GM10248 (cell line): ENCODE measurements at regions of chr2 and their contacts with region 1.

Region 1: DNA sequence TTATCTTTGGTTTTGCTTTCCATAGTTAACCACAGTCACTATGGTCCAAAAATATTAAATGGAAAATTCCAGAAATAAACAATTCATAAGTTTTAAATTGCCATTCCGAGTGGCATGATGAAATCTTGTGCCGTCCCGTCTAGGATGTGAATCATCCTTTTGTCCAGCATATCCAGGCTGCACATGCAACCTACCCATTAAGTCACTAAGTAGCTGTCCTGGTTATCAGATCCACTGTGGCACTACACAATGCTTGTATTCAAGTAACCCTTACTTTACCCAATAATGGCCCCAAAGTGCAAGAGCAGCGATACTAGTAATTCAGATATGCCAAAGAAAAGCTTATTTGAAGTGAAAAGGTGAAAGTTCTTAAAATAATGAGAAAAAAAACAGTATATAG is 10.7 kb downstream of the USP34 start:
- DNase-seq: no peak
- CTCF ChIP-seq: no peak

Region 2: DNA sequence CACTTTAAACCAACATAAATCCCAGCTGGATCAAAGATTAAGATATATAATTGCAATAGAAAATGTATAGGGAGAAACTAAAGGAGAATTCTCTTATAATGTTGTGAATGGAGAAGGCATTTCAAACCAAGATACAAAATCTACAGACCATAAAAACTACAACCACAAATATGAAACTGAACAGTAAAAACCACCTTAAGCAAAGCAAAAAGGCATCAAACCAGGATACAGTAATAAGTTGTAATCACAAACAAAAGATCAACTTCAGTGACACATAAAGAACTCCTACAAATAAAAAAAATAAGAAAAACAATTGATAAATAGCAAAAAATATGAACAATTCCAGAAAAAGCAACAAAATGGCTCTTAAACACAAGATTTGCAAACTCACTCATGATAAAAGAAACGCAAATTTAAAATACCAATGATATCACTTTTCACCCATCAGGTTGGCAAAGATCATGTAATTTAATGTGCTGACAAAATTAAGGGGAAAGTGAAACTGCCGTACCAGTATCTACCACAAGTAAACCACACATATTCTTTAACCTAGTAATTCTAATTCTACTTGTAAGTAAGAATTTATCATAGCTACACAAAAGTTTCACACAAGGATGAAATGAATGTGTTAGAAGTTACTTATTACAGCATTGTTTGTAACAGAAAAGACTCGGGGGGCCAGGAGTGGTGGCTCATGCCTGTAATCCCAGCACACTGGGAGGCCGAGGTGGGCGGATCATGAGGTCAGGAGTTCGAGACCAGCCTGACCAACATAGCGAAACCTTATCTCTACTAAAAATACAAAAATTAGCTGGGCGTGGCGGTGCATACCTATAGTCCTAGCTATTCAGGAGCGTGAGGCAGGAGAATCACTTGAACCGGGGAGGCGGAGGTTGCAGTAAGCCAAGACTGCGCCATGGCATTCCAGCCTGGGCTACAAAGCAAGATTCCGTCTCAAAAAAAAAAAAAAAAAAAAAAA is 91.2 kb before region 1 on chr2:
- CTCF ChIA-PET with region 1: no interaction called
- POLR2A ChIA-PET with region 1: no interaction called
- DNase-seq: no peak
- CTCF ChIP-seq: no peak

Region 3: DNA sequence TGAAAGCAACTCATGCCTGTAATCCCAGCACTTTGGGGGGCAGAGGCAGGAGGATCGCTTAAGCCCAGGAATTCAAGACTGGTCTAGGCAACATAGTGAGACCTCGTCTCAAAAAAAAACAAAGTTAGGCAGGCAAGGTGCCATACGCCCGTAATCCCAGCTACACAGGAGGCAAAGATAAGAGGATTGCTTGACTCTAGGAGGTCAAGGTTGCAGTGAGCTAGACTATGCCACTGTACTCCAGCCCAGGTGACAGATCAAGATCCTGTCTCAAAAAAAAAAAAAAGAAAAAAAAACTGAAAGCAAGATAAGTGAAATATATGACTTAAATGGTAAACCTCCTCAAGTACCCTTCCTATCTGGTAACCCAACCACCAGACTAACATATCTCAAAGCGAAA is 49.1 kb before region 1 on chr2:
- CTCF ChIA-PET with region 1: no interaction called
- POLR2A ChIA-PET with region 1: no interaction called
- DNase-seq: no peak
- CTCF ChIP-seq: no peak

Region 4: GRCh38 chr2:61443342-61444041 is 16.7 kb before region 1 on chr2:
- CTCF ChIA-PET with region 1: no interaction called
- POLR2A ChIA-PET with region 1: interaction called, 14 read pairs
- DNase-seq: peak; percentile 49
- CTCF ChIP-seq: no peak

Region 5: DNA sequence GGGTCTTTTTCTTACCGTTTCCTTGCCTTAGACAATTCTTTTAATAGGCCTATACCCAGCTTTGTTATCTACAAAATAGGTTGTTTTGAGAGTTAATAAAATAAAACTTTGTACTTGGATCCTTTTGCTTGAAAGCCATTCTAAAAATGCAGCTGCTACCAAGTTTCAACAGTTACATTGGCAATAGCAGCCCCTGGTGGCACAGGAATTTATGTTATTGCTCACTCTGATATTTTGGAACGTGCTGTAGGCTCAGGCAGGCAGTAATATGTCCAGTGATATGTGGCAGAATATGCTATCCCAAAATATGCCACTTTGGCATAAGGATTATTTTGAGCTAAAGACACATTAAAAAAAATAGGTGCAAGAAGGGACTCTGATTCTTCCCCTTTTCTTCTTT is 438.6 kb after region 1 on chr2:
- CTCF ChIA-PET with region 1: no interaction called
- POLR2A ChIA-PET with region 1: no interaction called
- DNase-seq: no peak
- CTCF ChIP-seq: peak; percentile 34